ENCODE measurements at regions of chr3 and their contacts with region 1.

Region 1: DNA sequence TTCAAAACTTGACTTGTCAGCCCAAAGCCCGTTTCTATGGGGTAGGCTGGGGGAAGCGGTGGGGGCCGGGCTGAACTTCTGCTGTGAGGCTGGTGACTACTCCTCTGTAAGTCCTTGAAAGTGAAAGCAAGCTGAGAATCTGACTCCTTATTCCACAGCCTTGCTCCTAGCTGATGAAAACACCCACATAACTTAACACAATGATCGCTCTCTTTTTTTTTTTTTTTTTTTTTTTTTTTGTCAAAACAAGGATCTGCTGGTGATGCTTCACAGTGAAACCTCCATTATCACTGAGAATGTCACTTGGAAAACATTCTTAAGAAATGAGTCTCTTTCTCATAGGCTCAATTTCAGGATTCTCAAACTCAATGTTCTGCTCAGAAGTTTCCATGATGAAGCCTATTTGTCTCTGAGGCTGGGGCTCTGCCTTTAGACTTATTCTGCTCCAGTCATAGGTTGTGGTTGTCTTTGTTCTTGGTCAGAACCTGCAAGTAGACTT is 31.4 kb upstream of the TKT start:
- DNase-seq: no peak
- H3K4me3 ChIP-seq: no peak overlapping the region
- H3K27ac ChIP-seq: no peak overlapping the region
- H3K4me1 ChIP-seq: no peaks in the 10 kb centered on the region
- H3K27me3 ChIP-seq: no peaks in the 10 kb centered on the region
- CTCF ChIP-seq: no peak

Region 2: DNA sequence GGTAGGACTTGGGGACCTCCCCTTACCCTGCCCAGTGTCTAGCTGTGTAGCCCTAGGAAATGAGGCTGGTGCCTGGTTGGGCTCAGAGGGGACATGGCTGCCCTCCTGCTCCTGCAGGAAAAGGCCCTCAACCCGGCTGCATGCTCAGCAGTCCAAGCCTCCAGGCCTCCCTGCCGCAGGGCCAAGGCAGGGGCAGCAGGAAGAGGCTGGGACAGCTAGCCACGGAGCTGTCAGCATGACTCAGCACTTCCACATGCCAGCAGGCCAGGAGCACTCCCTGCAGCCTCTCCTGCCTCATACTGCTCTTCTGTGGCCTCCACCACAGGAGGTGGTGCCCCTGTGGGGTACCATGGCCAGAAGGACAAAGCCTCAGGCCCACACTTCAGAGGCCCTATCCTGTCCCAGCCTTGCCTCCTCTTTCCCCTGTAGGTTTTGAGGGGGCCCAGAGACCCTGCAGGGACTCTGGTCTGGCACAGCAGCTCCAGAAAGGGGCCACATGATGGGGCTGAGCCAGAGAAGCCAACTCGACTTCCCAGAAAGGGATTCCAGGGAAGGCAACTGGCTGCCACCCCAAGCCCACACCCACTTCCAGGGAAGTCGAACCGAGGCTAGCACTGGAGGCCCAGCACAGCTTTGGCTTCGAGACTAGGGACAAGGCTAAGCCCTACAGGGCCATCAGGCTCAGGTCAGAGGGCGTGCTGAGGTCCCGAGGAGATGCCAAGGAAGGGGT is 50.9 kb before region 1 on chr3:
- CTCF ChIA-PET with region 1: no interaction called
- dilution Hi-C with region 1: no loop called
- in situ Hi-C with region 1: no loop called
- intact Hi-C with region 1: loop called (anchors 5 kb)
- DNase-seq: peak; percentile 68
- H3K4me3 ChIP-seq: no peak overlapping the region
- H3K27ac ChIP-seq: peak overlapping the region; percentile 8
- H3K4me1 ChIP-seq: peaks cover 36% of the 10 kb centered on the region
- H3K27me3 ChIP-seq: no peaks in the 10 kb centered on the region
- CTCF ChIP-seq: no peak